Posterior vena cava (tissue), 2 donors: ENCODE measurements at regions of chr13 and their contacts with region 1.

Region 1: GRCh38 chr13:66558506-66558905 is 671.6 kb downstream of the PCDH9 start:
- DNase-seq: no peak

Region 2: GRCh38 chr13:66513728-66514127 is 44.8 kb before region 1 on chr13:
- intact Hi-C with region 1: no loop called
- DNase-seq: no peak

Region 3: DNA sequence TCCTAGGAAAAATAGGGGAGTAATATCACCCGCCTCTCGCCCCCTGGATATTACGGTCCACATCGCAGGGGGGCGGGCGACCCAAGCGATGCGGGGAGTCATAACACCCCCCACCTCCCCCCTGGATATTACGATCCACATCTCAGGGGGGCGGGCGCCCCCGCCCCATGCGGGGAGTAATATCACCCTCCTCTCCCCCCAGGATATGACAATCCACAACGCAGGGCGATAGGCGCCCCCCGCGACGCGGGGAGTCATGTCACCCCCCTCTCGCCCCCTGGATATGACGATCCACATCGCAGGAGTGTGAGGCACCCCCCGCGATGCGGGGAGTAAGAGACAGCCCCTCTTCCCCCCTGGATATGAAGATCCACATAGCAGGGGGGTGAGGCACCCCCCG is 1356.0 kb after region 1 on chr13:
- intact Hi-C with region 1: loop called in 1 of 2 experiments (anchors 10 kb)
- DNase-seq: no peak